Heart left ventricle (tissue), 16 donors: ENCODE measurements at regions of chr14 and their contacts with region 1.

Region 1: GRCh38 chr14:37150414-37150813 is 22.0 kb downstream of the SLC25A21 start:
- DNase-seq: no peak
- ATAC-seq: no peak
- H3K4me3 ChIP-seq: no peak overlapping the region
- H3K27ac ChIP-seq: no peak overlapping the region
- H3K4me1 ChIP-seq: no peaks in the 10 kb centered on the region
- H3K27me3 ChIP-seq: no peaks in the 10 kb centered on the region
- CTCF ChIP-seq: peak; percentile 53 to 79 (median 68)
- POLR2A ChIP-seq: no peak

Region 2: GRCh38 chr14:36647824-36648753 is 502.3 kb before region 1 on chr14:
- intact Hi-C with region 1: loop called in 5 of 10 experiments (anchors 5 to 10 kb)
- DNase-seq: peak in 1 of 5 donors; percentile 25
- ATAC-seq: peak in 3 of 4 donors; percentile 68 to 87 (median 78)
- H3K4me3 ChIP-seq: peak overlapping the region in 11 of 12 donors; percentile 2 to 42 (median 32)
- H3K27ac ChIP-seq: no peak overlapping the region
- H3K4me1 ChIP-seq: peaks cover 0 to 19% (median 13%) of the 10 kb centered on the region in 12 donors
- H3K27me3 ChIP-seq: peaks cover 43 to 97% (median 80%) of the 10 kb centered on the region in 9 donors
- CTCF ChIP-seq: peak in 10 of 12 donors; percentile 10 to 53 (median 38)
- POLR2A ChIP-seq: no peak

Region 3: DNA sequence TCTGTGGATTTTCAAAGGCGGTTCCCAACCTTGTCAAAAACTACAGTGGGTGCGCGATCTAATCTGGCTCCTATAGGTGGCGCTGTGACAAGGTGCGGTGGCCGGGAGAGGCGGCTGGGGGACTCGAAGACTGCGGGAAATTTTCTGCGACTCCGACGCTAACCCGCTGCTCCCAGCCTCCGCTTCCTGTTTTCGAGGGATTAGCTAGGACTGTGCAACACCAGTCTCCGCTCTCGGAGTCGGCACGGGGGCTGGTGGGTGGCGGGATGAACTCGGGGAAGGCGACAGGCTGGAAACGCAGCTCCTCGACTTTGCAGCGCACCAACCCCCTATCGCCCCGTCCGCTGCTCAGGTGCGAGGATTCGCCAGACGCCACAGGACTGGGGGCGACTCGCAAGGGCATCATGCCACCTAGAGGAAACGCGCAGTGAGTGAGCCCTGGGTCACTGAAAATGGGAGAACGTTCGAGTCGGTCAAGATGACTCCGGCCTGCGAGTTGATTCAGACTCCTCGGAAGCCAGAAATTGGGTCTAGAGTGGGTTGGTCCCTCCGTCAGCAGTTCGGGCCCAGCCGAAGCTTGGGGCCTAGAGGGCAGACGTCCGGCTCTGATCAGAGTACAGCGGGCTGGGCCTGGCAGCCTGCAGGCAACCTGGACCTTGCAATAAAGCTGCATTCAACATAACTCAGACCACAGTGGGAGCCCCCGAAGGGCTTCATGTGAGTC is 494.3 kb before region 1 on chr14:
- intact Hi-C with region 1: loop called in 2 of 10 experiments (anchors 10 kb)
- DNase-seq: no peak
- ATAC-seq: peak in 1 of 4 donors; percentile 20
- H3K4me3 ChIP-seq: no peak overlapping the region
- H3K27ac ChIP-seq: no peak overlapping the region
- H3K4me1 ChIP-seq: peaks cover 0 to 42% (median 20%) of the 10 kb centered on the region in 12 donors
- H3K27me3 ChIP-seq: peaks cover 83 to 100% (median 100%) of the 10 kb centered on the region in 9 donors
- CTCF ChIP-seq: peak in 9 of 12 donors; percentile 26 to 47 (median 33)
- POLR2A ChIP-seq: no peak

Region 4: DNA sequence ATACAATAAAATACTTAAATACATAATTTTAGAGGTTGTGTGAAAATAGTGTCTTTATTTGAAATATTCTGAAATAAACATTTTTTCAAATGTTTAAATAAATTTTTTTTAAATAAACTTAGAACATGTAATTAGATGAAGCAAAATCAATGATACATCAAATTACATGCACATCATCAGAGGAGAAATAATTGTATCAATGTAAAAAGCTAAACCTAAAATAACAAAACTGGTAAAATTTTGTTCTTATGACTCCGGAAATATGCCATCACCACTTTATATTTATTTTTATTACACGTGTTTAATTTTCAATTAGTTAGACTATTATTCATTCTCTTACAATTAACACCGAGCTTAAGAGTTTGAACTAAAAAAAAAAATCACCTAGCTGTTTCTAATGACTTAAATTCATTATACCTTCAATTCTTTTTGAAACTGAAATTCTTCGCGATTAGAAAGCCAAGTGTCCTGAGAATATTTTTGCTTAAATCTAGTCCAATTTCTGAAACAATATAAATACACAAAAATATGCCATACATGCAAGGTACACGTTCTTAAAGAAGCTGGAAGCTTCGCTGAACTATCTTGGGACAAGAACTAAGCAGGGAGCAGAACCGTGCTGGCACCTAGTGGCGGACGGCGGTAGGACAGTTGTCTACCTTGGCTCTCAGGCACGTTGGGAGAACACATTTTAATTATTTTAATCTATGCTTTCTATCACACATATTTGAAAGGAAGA is 208.5 kb before region 1 on chr14:
- intact Hi-C with region 1: loop called in 3 of 10 experiments (anchors 10 kb)
- DNase-seq: peak; percentile 34 to 78 (median 46)
- ATAC-seq: peak in 3 of 4 donors; percentile 37 to 81 (median 73)
- H3K4me3 ChIP-seq: no peak overlapping the region
- H3K27ac ChIP-seq: no peak overlapping the region
- H3K4me1 ChIP-seq: no peaks in the 10 kb centered on the region
- H3K27me3 ChIP-seq: peaks cover 0 to 13% (median 0%) of the 10 kb centered on the region in 9 donors
- CTCF ChIP-seq: peak; percentile 87 to 97 (median 94)
- POLR2A ChIP-seq: no peak

Region 5: DNA sequence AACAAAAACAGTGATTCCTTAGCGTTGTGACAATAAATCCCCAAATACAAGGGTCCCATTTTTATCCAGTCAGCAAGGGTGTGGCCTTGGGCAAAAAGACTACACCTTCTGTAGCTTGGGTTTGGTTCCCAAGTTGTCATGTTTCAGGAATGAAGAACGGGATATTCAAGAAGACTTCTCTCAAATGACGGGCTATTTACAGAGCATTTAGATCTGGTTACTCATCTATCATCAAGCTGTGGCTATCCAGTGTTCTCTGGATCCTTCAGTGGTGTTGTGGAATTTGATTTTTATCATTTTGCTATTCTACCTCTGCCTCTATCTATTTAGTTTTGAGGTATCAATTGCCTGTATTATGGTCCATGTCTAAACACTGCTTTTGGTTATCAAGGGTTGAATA is 197.7 kb before region 1 on chr14:
- intact Hi-C with region 1: loop called in 4 of 10 experiments (anchors 10 kb)
- DNase-seq: no peak
- ATAC-seq: no peak
- H3K4me3 ChIP-seq: no peak overlapping the region
- H3K27ac ChIP-seq: no peak overlapping the region
- H3K4me1 ChIP-seq: no peaks in the 10 kb centered on the region
- H3K27me3 ChIP-seq: peaks cover 0 to 5% (median 0%) of the 10 kb centered on the region in 9 donors
- CTCF ChIP-seq: no peak
- POLR2A ChIP-seq: no peak